PC-9 (cell line): ENCODE measurements at regions of chr6 and their contacts with region 1.

Region 1: GRCh38 chr6:75791881-75792280 is 42.8 kb downstream of the MYO6 start:
- DNase-seq: no peak
- H3K4me3 ChIP-seq: no peak overlapping the region
- H3K27ac ChIP-seq: no peak overlapping the region
- H3K4me1 ChIP-seq: no peaks in the 10 kb centered on the region
- H3K27me3 ChIP-seq: no peaks in the 10 kb centered on the region
- CTCF ChIP-seq: no peak

Region 2: DNA sequence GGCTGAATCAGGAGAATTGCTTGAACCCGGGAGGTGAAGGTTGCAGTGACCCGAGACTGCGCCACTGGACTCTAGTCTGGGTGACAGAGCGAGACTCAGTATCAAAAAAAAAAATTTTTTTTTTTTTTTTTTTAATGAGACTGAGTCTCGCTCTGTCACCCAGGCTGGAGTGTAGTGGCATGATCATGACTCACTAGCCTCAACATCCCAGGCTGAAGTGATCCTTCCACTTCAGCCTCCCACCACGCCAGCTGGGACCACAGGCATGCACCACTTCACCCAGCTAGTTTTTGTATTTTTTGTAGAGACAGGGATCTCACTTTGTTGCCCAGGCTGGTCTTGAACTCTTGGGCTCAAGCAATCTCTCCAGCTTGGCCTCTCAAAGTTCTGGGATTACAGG is 10.5 kb after region 1 on chr6:
- CTCF ChIA-PET with region 1: no interaction called
- POLR2A ChIA-PET with region 1: no interaction called
- intact Hi-C with region 1: loop called (anchors 1 kb)
- DNase-seq: no peak
- H3K4me3 ChIP-seq: no peak overlapping the region
- H3K27ac ChIP-seq: no peak overlapping the region
- H3K4me1 ChIP-seq: peaks cover 23% of the 10 kb centered on the region
- H3K27me3 ChIP-seq: no peaks in the 10 kb centered on the region
- CTCF ChIP-seq: no peak

Region 3: GRCh38 chr6:75852721-75853120 is 60.8 kb after region 1 on chr6:
- CTCF ChIA-PET with region 1: no interaction called
- POLR2A ChIA-PET with region 1: interaction called, 10 read pairs
- intact Hi-C with region 1: no loop called
- DNase-seq: peak in 1 of 2 experiments; percentile 51
- H3K4me3 ChIP-seq: no peak overlapping the region
- H3K27ac ChIP-seq: peak overlapping the region; percentile 37
- H3K4me1 ChIP-seq: peaks cover 52% of the 10 kb centered on the region
- H3K27me3 ChIP-seq: no peaks in the 10 kb centered on the region
- CTCF ChIP-seq: no peak